Calu3 (cell line): ENCODE measurements at regions of chr4 and their contacts with region 1.

Region 1: GRCh38 chr4:78962597-78963115 is 23.4 kb upstream of the PAQR3 start:
- DNase-seq: no peak
- H3K4me3 Mint-ChIP-seq: no peak overlapping the region
- H3K27ac Mint-ChIP-seq: no peak overlapping the region
- H3K4me1 Mint-ChIP-seq: no peaks in the 10 kb centered on the region
- H3K27me3 Mint-ChIP-seq: no peaks in the 10 kb centered on the region
- CTCF ChIP-seq: no peak

Region 2: GRCh38 chr4:79232540-79232939 is 269.9 kb after region 1 on chr4:
- CTCF ChIA-PET with region 1: no interaction called
- intact Hi-C with region 1: no loop called
- DNase-seq: no peak
- H3K4me3 Mint-ChIP-seq: no peak overlapping the region
- H3K27ac Mint-ChIP-seq: no peak overlapping the region
- H3K4me1 Mint-ChIP-seq: no peaks in the 10 kb centered on the region
- H3K27me3 Mint-ChIP-seq: no peaks in the 10 kb centered on the region
- CTCF ChIP-seq: no peak

Region 3: GRCh38 chr4:79467246-79467932 is 504.7 kb after region 1 on chr4:
- CTCF ChIA-PET with region 1: no interaction called
- intact Hi-C with region 1: loop called (anchors 10 kb)
- DNase-seq: no peak
- H3K4me3 Mint-ChIP-seq: no peak overlapping the region
- H3K27ac Mint-ChIP-seq: no peak overlapping the region
- H3K4me1 Mint-ChIP-seq: no peaks in the 10 kb centered on the region
- H3K27me3 Mint-ChIP-seq: peaks cover 3% of the 10 kb centered on the region
- CTCF ChIP-seq: no peak